GM18951 (cell line): ENCODE measurements at regions of chr10 and their contacts with region 1.

Region 1: GRCh38 chr10:114470956-114471905 is 66.9 kb upstream of the AFAP1L2 start:
- POLR2A ChIP-seq: no peak

Region 2: DNA sequence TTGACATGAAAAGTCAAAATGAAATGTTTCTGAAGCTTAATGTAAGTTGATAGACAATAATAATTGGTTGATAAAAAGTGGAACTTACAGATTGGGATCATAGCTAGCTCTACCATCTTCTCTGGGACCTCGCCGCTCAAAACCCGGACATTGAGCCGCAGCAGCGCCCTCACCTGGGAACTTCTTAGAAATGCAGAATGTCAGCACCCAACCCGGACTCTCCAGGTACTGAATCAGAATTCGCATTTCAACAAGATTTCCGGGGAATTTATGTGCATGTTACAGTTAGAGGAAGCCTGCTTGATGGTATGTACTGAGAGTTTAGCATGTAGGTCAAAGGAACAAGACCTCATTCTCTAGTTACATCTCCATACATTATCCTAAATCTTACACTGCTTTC is 223.5 kb after region 1 on chr10:
- in situ Hi-C with region 1: loop called (anchors 10 kb)
- POLR2A ChIP-seq: no peak